Right ventricle myocardium inferior (tissue), 1 donor: ENCODE measurements at regions of chr21 and their contacts with region 1.

Region 1: GRCh38 chr21:15592271-15592860 is 137.4 kb upstream of the USP25 start:
- DNase-seq: no peak
- ATAC-seq: no peak

Region 2: GRCh38 chr21:14259747-14260146 is 1332.6 kb before region 1 on chr21:
- intact Hi-C with region 1: loop called (anchors 5 kb)
- DNase-seq: no peak
- ATAC-seq: no peak

Region 3: GRCh38 chr21:14403681-14404318 is 1188.6 kb before region 1 on chr21:
- intact Hi-C with region 1: loop called (anchors 5 kb)
- DNase-seq: no peak
- ATAC-seq: no peak

Region 4: DNA sequence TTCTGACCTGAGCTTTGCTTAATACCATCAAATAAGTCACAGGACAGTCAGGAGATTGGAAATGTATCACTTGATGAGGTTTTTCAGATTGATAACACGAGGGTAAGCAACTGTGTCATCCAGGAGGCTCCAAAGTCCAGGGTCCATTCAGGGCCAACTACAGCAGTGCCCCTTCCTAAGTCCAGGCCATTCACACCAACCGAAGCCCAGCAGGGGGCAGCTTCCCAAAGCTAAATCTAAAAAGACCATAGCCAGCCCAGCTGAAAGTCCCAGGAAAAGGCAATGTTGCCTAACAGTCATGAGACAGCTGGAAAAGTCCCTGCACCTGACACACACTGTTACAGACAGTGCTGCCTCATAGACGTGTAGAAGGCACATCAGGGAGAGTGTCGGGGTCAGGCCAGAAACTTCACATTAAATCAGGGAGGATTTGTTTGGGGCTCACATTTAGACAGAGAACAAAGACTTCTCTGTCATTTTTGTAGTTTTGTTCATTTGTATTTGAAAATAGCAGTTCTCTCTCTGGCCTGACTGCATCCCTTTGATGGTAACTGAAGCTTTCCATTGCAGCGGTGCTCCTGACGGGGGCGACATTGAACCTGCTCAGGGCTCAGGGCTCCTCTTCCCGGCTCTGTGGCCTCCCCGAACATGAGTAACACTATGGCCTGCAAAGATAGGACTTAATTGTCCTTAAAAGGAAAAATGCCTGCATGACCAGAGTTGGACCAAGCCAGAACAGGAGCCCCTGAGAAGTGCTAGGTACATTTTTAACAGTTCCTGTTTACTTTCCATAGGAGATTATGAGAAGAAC is 728.0 kb before region 1 on chr21:
- intact Hi-C with region 1: loop called (anchors 5 kb)
- DNase-seq: peak; percentile 73
- ATAC-seq: peak; percentile 85

Region 5: GRCh38 chr21:15617964-15618363 is 25.6 kb after region 1 on chr21:
- intact Hi-C with region 1: no loop called
- DNase-seq: no peak
- ATAC-seq: no peak

Region 6: GRCh38 chr21:15788847-15789493 is 196.6 kb after region 1 on chr21:
- intact Hi-C with region 1: no loop called
- DNase-seq: no peak
- ATAC-seq: no peak